OCI-LY7 (cell line): ENCODE measurements at regions of chr13 and their contacts with region 1.

Region 1: DNA sequence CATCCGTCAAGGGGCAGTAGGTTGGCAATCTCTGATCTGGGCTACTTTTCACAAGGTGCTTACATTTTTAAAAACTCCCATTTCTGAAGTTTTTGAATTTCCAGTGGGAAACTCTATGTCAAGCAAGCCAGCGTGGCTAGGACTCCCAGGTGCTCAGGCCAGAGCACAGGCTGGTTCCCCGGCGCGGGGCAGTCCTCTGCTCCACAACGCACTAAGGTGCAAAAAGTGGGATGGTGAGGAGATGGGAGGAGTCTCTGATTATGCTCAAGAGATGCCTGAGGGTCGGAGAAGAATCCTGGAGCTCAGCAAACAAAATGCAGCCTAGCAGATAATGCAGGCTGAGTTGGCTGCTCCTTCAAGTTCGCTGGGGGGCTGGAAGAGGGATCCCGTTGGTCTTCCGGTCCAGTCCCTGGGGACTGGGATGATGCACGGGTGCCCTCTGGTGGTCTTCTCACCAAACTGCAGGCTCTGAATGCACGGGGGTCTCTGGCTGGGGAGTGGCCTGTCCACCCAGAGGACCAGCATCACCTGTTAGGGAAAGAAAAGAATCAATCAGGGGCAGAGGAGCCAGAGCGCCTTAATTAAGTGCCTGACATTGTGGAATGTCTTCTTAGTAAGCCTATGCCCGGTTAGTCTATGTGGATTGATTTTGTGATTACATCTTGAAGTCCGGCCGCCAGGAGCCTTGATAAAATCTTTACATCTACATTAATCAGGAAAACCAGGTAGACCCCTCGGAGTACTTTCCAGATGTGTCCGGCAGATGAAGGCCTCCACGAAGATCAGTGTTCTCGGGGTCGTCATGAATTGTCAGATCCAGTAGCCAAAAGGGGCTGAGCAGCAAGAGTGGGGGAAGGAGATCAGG is 244.4 kb upstream of the MAB21L1 start:
- DNase-seq: peak; percentile 33
- H3K4me3 ChIP-seq: no peak overlapping the region
- H3K27ac ChIP-seq: no peak overlapping the region
- H3K4me1 ChIP-seq: no peaks in the 10 kb centered on the region
- CTCF ChIP-seq: peak; percentile 89

Region 2: DNA sequence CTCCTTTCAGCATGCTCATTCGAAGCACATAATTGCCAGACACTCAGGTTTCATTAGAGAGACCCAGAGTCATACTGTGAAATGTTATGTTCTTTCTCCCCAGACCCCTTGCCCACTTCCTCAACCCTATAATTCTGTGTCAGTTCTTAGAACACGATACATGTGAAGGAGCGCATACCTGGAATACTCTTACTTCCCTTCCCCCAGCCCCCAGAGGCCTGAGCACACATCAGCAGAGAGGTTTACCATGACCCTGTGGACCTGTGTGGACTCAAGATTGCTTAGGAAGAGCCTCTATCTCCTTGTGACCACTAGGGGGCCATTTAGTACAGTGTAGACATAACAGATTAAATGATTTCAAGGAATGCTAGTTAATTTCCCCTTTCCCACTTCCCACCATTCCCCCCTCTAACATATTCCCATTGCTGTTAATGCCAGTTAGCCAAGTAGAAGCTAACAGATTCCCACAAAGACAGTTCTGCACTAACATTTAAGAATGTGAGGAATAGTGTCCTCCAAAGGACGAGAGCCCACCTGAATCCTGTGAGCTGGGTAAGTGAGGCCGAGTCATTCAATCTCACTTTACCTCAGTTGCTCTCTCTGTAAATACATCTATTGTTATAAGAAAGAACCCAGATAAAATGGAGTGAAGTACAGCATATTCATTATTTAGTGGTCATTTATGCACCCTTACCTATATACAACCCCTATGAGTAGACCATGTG is 90.2 kb before region 1 on chr13:
- CTCF ChIA-PET with region 1: no interaction called
- POLR2A ChIA-PET with region 1: no interaction called
- intact Hi-C with region 1: loop called (anchors 2 kb)
- DNase-seq: peak; percentile 54
- H3K4me3 ChIP-seq: no peak overlapping the region
- H3K27ac ChIP-seq: no peak overlapping the region
- H3K4me1 ChIP-seq: no peaks in the 10 kb centered on the region
- CTCF ChIP-seq: peak; percentile 87